ENCODE measurements at regions of chr4 and their contacts with region 1.

Region 1: GRCh38 chr4:20159516-20159915 is 92.2 kb upstream of the SLIT2 start:
- DNase-seq: no peak
- H3K4me3 ChIP-seq: no peak overlapping the region
- CTCF ChIP-seq: no peak

Region 2: GRCh38 chr4:20096911-20097310 is 62.6 kb before region 1 on chr4:
- in situ Hi-C with region 1: no loop called
- DNase-seq: no peak
- H3K4me3 ChIP-seq: no peak overlapping the region
- CTCF ChIP-seq: no peak

Region 3: GRCh38 chr4:20219521-20219920 is 60.0 kb after region 1 on chr4:
- in situ Hi-C with region 1: loop called (anchors 5 kb)
- DNase-seq: no peak
- H3K4me3 ChIP-seq: no peak overlapping the region
- CTCF ChIP-seq: no peak

Measured in astrocyte of the cerebellum (primary cell).